Vagina (tissue), 2 donors: ENCODE measurements at regions of chr2 and their contacts with region 1.

Region 1: DNA sequence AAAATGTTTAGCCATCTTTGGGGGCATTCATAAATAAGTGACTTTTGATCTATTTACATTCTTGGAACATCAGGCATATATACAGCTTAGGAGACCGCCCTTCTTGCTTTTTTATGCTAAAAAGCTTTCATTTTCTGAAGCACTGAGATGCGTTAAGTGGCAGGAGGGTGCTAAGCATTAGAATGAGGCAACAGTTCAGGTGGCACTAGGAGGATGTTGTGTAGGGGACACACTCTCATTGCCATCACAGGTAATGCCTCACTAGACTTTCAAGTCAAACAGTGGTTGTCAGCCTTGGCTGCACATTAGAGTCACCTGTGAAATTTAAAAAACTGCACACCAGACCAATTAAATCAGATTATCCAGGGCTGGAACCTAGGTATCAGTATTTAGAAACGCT is 39.1 kb downstream of the EHBP1 start:
- DNase-seq: no peak
- H3K4me3 ChIP-seq: no peak overlapping the region
- H3K27ac ChIP-seq: no peak overlapping the region
- H3K4me1 ChIP-seq: peaks cover 43% of the 10 kb centered on the region
- H3K27me3 ChIP-seq: no peaks in the 10 kb centered on the region
- CTCF ChIP-seq: no peak
- POLR2A ChIP-seq: no peak

Region 2: GRCh38 chr2:60852282-60852860 is 1892.2 kb before region 1 on chr2:
- intact Hi-C with region 1: no loop called
- DNase-seq: no peak
- H3K4me3 ChIP-seq: no peak overlapping the region
- H3K27ac ChIP-seq: no peak overlapping the region
- H3K4me1 ChIP-seq: no peaks in the 10 kb centered on the region
- H3K27me3 ChIP-seq: no peaks in the 10 kb centered on the region
- CTCF ChIP-seq: no peak
- POLR2A ChIP-seq: no peak

Region 3: GRCh38 chr2:62691186-62691585 is 53.4 kb before region 1 on chr2:
- intact Hi-C with region 1: loop called (anchors 2 kb)
- DNase-seq: no peak
- H3K4me3 ChIP-seq: no peak overlapping the region
- H3K27ac ChIP-seq: no peak overlapping the region
- H3K4me1 ChIP-seq: no peaks in the 10 kb centered on the region
- H3K27me3 ChIP-seq: no peaks in the 10 kb centered on the region
- CTCF ChIP-seq: no peak
- POLR2A ChIP-seq: no peak

Region 4: DNA sequence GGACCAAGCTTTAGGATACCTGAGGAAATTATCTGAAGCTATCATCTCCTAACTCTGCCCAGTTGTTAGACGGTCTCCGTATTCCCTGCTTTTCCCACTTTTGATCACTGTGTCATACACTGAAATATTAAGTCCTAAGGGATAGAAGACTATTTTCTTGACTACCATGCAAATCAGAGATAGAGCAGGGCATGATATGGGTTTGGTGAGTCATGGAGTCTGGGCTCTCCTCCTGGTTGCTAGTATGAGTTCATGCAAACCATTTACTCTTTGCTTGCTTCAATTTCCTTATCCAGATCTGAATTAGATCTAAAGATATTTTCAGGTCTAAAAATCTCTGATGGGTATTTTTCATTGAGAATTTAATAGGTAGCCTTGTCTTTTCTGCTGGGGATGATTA is 16.0 kb after region 1 on chr2:
- intact Hi-C with region 1: no loop called
- DNase-seq: no peak
- H3K4me3 ChIP-seq: no peak overlapping the region
- H3K27ac ChIP-seq: no peak overlapping the region
- H3K4me1 ChIP-seq: peaks cover 20% of the 10 kb centered on the region
- H3K27me3 ChIP-seq: no peaks in the 10 kb centered on the region
- CTCF ChIP-seq: no peak
- POLR2A ChIP-seq: no peak

Region 5: GRCh38 chr2:62934517-62934916 is 189.9 kb after region 1 on chr2:
- intact Hi-C with region 1: no loop called
- DNase-seq: no peak
- H3K4me3 ChIP-seq: no peak overlapping the region
- H3K27ac ChIP-seq: no peak overlapping the region
- H3K4me1 ChIP-seq: no peaks in the 10 kb centered on the region
- H3K27me3 ChIP-seq: no peaks in the 10 kb centered on the region
- CTCF ChIP-seq: no peak
- POLR2A ChIP-seq: no peak

Region 6: GRCh38 chr2:63819765-63820717 is 1075.4 kb after region 1 on chr2:
- intact Hi-C with region 1: loop called (anchors 5 kb)
- DNase-seq: no peak
- H3K4me3 ChIP-seq: no peak overlapping the region
- H3K27ac ChIP-seq: peak overlapping the region; percentile 36
- H3K4me1 ChIP-seq: no peaks in the 10 kb centered on the region
- H3K27me3 ChIP-seq: no peaks in the 10 kb centered on the region
- CTCF ChIP-seq: no peak
- POLR2A ChIP-seq: no peak